Breast epithelium (tissue), 4 donors: ENCODE measurements at regions of chr2 and their contacts with region 1.

Region 1: DNA sequence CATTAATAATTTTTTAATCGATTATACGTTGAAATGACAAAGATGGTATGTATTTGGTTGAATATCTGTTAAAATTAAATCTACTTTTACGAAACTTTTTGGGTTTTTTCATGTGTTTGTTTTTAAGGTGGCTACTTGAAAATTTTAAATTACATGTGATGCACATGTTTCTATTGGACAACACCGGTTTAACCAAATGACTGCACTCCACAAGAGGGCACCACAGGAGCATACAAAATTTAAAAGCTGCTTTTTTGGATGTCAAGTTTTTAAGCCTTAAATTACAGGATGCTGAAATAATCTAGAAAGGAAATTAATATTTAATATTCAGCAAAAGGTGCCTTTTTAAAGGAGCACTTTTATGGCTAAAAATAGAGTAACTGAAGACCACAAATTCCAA is 98.7 kb downstream of the ACVR1 start:
- DNase-seq: no peak
- H3K4me3 ChIP-seq: no peak overlapping the region
- H3K27ac ChIP-seq: no peak overlapping the region
- H3K4me1 ChIP-seq: peaks cover 0 to 4% of the 10 kb centered on the region in 2 donors
- H3K27me3 ChIP-seq: no peaks in the 10 kb centered on the region
- CTCF ChIP-seq: peak in 2 of 3 donors; percentile 51 to 59
- POLR2A ChIP-seq: no peak

Region 2: DNA sequence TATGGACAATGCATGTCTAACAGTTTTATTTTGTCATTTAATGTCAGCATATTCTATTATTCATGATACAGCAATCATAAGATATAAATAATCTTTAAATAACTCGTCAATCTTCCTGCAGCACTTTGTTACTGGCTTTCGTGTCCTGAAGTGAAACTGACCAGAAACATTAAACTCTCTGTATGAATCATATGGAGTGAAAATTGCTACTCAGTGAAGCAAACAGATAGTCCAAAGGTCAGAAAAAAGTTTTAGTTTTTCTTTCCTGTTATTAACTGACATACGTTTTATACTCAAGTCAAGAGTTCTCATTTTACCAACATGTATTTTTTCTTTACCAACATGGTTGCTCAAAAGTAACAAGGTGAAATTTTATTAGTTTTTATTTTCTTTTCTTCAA is 626.7 kb before region 1 on chr2:
- intact Hi-C with region 1: loop called (anchors 10 kb)
- DNase-seq: no peak
- H3K4me3 ChIP-seq: no peak overlapping the region
- H3K27ac ChIP-seq: no peak overlapping the region
- H3K4me1 ChIP-seq: no peaks in the 10 kb centered on the region
- H3K27me3 ChIP-seq: no peaks in the 10 kb centered on the region
- CTCF ChIP-seq: no peak
- POLR2A ChIP-seq: no peak

Region 3: GRCh38 chr2:157809212-157809611 is 31.8 kb after region 1 on chr2:
- intact Hi-C with region 1: no loop called
- DNase-seq: no peak
- H3K4me3 ChIP-seq: no peak overlapping the region
- H3K27ac ChIP-seq: no peak overlapping the region
- H3K4me1 ChIP-seq: no peaks in the 10 kb centered on the region
- H3K27me3 ChIP-seq: no peaks in the 10 kb centered on the region
- CTCF ChIP-seq: no peak
- POLR2A ChIP-seq: no peak

Region 4: GRCh38 chr2:158366342-158366741 is 588.9 kb after region 1 on chr2:
- intact Hi-C with region 1: no loop called
- DNase-seq: no peak
- H3K4me3 ChIP-seq: no peak overlapping the region
- H3K27ac ChIP-seq: no peak overlapping the region
- H3K4me1 ChIP-seq: no peaks in the 10 kb centered on the region
- H3K27me3 ChIP-seq: no peaks in the 10 kb centered on the region
- CTCF ChIP-seq: no peak
- POLR2A ChIP-seq: no peak

Region 5: DNA sequence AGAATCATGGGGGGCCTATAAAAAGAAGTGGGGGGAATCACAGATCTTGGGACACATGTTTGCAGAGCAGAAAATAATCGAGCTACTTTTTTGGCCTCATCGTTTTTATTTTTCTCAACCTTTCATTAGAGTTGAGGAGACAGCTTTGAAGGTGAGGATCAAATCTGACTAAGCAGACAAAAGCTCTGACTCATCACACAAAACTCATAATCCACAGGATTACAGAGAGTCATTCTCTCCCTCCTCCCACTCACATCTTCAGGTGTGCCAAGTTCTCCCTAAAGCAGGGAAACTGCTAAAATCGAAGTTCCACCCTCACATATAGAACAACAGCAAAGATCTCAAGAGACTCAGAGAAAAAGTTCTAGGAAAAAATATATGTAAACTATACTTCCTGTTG is 1823.3 kb after region 1 on chr2:
- intact Hi-C with region 1: loop called (anchors 10 kb)
- DNase-seq: no peak
- H3K4me3 ChIP-seq: no peak overlapping the region
- H3K27ac ChIP-seq: peak overlapping the region; percentile 33 to 50
- H3K4me1 ChIP-seq: peaks cover 0 to 5% of the 10 kb centered on the region in 2 donors
- H3K27me3 ChIP-seq: no peaks in the 10 kb centered on the region
- CTCF ChIP-seq: no peak
- POLR2A ChIP-seq: no peak